BJ (cell line): ENCODE measurements at regions of chr3 and their contacts with region 1.

Region 1: GRCh38 chr3:23999012-23999641 is 54.0 kb downstream of the NR1D2 start:
- DNase-seq: no peak
- H3K4me3 ChIP-seq: no peak overlapping the region
- H3K27me3 ChIP-seq: peaks cover 1% of the 10 kb centered on the region; the same call in 1 of the 2 replicates
- CTCF ChIP-seq: peak; percentile 89

Region 2: DNA sequence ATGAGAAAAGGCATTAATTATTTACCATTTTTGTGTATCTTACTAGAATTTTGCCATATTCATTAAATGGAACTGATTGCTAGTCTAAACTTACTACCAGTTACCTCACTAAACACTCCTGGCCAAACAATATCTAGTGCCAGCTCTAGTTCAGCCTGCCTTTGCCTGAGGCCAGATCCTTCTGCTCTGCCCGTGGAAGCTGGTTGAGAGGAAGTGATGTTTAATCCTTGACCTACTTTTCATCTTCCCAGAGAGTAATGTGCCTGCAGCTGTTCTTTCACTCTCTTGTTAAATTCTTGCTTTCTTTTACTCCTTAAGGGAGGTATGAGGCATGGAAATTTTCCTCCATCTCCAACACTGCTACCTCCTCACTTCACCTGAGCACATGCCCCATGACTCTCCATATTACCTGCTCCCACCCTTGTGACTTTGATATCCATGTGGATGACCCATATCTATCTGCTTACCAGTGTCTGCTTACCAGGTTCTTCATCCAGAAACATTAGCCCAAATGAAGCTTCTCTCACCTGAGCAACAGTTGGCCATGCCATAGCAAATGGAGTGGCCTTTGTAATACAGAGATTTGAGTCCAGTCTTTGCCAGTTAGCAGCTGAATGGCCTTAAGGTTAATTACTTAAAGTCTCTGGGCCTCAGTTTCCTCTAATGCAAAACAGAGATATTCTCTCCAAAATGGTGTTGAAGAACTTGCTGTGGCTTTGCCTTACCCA is 139.9 kb before region 1 on chr3:
- CTCF ChIA-PET with region 1: no interaction called
- POLR2A ChIA-PET with region 1: no interaction called
- DNase-seq: no peak
- H3K4me3 ChIP-seq: no peak overlapping the region
- H3K27me3 ChIP-seq: no peaks in the 10 kb centered on the region
- CTCF ChIP-seq: no peak

Region 3: DNA sequence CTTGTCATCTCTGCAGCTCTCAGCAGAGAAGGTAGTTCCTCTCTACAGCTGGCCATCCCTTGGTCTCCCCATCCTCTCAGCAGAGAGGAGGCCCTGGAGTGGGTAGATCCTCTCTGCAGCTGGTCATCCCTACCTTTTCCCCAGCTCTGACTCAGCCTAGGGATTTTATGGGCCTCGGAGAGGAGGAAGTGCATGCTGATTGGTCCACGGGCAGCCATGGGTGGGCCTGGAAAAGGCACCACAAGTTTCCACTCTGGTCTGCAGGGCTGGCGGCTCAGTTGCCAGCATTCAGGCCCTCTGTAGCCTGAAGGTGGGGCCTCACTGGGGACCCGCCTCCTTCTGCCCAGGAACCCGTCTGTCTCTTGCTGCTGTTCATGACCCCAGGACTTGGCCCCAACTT is 17.2 kb before region 1 on chr3:
- CTCF ChIA-PET with region 1: interaction called, 7 read pairs
- POLR2A ChIA-PET with region 1: interaction called, 10 read pairs
- DNase-seq: no peak
- H3K4me3 ChIP-seq: no peak overlapping the region
- H3K27me3 ChIP-seq: no peaks in the 10 kb centered on the region
- CTCF ChIP-seq: no peak

Region 4: GRCh38 chr3:24185738-24186384 is 186.7 kb after region 1 on chr3:
- CTCF ChIA-PET with region 1: interaction called, 14 read pairs
- POLR2A ChIA-PET with region 1: no interaction called
- DNase-seq: no peak
- H3K4me3 ChIP-seq: no peak overlapping the region
- H3K27me3 ChIP-seq: no peaks in the 10 kb centered on the region
- CTCF ChIP-seq: peak; percentile 74

Region 5: DNA sequence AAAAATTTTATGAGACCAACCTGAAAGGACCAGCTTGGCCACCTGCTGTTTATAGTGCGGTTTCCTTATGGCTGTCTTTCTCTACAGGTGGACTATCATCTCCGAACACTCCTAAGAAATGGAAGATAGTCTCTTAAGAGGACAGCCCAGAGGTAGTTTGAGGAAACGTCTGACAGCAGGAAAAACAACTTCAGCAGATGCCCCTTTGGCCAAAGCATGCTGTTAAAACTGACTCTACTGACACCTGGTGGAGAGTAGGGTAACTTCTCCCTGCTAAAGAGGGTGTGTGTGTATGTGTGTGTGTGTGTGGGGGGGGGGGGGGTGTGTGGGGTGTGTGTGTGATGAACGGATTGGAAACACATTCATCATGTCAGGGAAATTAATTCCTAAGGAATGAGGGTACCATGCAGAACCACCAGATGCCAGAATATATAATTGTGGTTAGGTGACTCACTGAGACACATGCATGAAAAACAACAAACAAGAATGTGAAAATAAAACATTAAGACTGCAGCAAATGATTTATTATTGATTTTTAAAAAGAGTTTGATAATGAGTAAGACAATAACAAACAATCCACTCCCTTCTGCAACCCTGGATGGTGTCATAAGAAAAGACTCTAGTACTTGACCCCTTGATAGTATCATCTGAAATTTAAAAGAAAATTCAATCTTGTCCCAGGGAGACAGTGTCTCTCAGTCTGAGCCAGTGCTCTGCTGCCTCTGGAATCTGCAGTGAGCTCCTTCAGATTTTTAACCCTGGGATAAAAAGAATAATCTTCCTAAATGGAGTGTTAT is 239.0 kb after region 1 on chr3:
- CTCF ChIA-PET with region 1: interaction called, 31 read pairs
- POLR2A ChIA-PET with region 1: no interaction called
- DNase-seq: peak; percentile 95
- H3K4me3 ChIP-seq: no peak overlapping the region
- H3K27me3 ChIP-seq: no peaks in the 10 kb centered on the region; the same call in 1 of the 2 replicates
- CTCF ChIP-seq: peak; percentile 72

Region 6: GRCh38 chr3:24631481-24631880 is 632.4 kb after region 1 on chr3:
- CTCF ChIA-PET with region 1: no interaction called
- POLR2A ChIA-PET with region 1: no interaction called
- DNase-seq: no peak
- H3K4me3 ChIP-seq: no peak overlapping the region
- H3K27me3 ChIP-seq: no peaks in the 10 kb centered on the region
- CTCF ChIP-seq: no peak

Region 7: GRCh38 chr3:24683633-24684384 is 684.7 kb after region 1 on chr3:
- CTCF ChIA-PET with region 1: interaction called, 10 read pairs
- POLR2A ChIA-PET with region 1: no interaction called
- DNase-seq: no peak
- H3K4me3 ChIP-seq: no peak overlapping the region
- H3K27me3 ChIP-seq: no peaks in the 10 kb centered on the region
- CTCF ChIP-seq: peak; percentile 69